Activated CD8-positive, alpha-beta T cell treated with anti-CD3 and anti-CD28 coated beads for 36 hours (primary cell): ENCODE measurements at regions of chr2 and their contacts with region 1.

Region 1: DNA sequence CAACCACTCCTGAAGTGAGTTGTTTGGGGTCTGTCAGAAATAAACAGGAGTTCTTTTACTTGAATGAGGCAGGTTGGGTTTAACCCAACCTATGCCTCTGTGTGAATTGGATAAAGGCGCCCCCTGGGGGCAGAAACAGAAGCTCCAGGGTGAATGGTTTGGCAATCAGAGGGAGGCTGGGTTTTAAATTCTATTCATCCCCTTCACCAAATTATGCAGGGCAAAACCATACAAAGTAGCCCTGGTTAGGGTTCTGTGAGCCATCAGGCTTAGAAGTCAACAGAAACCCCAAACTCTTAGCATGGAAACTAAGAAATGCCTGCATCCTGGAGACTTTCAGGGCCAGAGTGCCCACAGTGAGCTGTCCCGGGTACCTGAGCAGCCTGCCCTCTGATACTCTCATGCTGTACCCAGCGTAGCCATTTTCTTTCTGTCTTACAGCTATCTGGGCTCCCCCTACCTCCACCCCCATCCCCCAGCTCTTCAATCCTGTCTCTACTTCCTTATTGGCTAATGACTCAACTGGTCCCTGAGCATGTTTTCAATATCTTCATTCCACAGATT is 241.5 kb downstream of the ICOS start:
- DNase-seq: peak; percentile 85
- ATAC-seq: peak; percentile 89
- H3K4me3 Mint-ChIP-seq: no peak overlapping the region
- H3K27ac Mint-ChIP-seq: no peak overlapping the region
- H3K4me1 Mint-ChIP-seq: no peaks in the 10 kb centered on the region
- H3K27me3 Mint-ChIP-seq: peaks cover 8% of the 10 kb centered on the region
- CTCF ChIP-seq: peak; percentile 75

Region 2: GRCh38 chr2:204078003-204078698 is 99.9 kb before region 1 on chr2:
- CTCF ChIA-PET with region 1: interaction called, 83 read pairs
- POLR2A ChIA-PET with region 1: no interaction called
- intact Hi-C with region 1: loop called (anchors 2 kb)
- DNase-seq: no peak
- ATAC-seq: no peak
- H3K4me3 Mint-ChIP-seq: no peak overlapping the region
- H3K27ac Mint-ChIP-seq: no peak overlapping the region
- H3K4me1 Mint-ChIP-seq: peaks cover 2% of the 10 kb centered on the region
- H3K27me3 Mint-ChIP-seq: peaks cover 5% of the 10 kb centered on the region
- CTCF ChIP-seq: no peak

Region 3: GRCh38 chr2:204135752-204136151 is 42.3 kb before region 1 on chr2:
- CTCF ChIA-PET with region 1: interaction called, 25 read pairs
- POLR2A ChIA-PET with region 1: no interaction called
- intact Hi-C with region 1: loop called (anchors 5 kb)
- DNase-seq: no peak
- ATAC-seq: peak; percentile 51
- H3K4me3 Mint-ChIP-seq: no peak overlapping the region
- H3K27ac Mint-ChIP-seq: no peak overlapping the region
- H3K4me1 Mint-ChIP-seq: no peaks in the 10 kb centered on the region
- H3K27me3 Mint-ChIP-seq: peaks cover 4% of the 10 kb centered on the region
- CTCF ChIP-seq: no peak

Region 4: DNA sequence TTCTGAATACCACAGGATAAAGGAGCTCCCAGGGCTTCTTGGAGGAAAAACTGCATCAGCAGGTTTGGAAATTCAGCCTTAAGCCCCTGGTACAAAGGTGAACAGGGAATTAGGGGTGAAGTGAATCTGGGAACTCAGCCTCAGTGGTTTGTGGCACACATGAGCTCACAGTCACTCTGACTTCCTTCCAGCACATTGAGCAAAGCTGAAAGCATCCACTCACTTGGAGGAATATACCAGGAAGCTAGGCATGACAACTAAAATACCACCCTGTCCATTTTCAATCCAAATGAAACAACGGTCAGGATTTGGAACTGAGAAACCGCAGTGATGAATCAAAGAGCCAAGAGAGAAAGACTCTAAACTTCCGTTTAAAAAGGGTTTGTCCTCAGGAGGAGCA is 25.4 kb before region 1 on chr2:
- CTCF ChIA-PET with region 1: interaction called, 39 read pairs
- POLR2A ChIA-PET with region 1: no interaction called
- intact Hi-C with region 1: no loop called
- DNase-seq: no peak
- ATAC-seq: no peak
- H3K4me3 Mint-ChIP-seq: no peak overlapping the region
- H3K27ac Mint-ChIP-seq: no peak overlapping the region
- H3K4me1 Mint-ChIP-seq: no peaks in the 10 kb centered on the region
- H3K27me3 Mint-ChIP-seq: peaks cover 18% of the 10 kb centered on the region
- CTCF ChIP-seq: no peak

Region 5: DNA sequence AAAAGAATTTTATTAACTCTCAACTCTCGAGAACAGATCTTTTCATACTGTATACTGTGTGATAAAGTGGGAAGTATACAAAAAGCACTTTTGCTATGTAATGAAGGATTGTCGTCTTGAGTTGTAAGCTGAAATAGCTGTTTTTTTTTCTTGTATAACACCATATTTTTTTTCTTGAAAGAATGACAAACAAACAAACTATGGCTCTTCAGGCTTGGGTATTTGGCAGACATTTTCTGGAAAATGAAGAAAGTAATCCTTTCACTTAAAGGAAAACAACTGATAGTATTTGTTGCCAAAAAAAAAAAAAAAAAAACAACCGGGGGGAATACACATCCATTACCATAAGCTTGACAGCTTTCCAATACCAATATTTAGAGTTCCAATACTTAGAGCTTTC is 11.1 kb before region 1 on chr2:
- CTCF ChIA-PET with region 1: interaction called, 44 read pairs
- POLR2A ChIA-PET with region 1: no interaction called
- intact Hi-C with region 1: no loop called
- DNase-seq: no peak
- ATAC-seq: no peak
- H3K4me3 Mint-ChIP-seq: no peak overlapping the region
- H3K27ac Mint-ChIP-seq: no peak overlapping the region
- H3K4me1 Mint-ChIP-seq: no peaks in the 10 kb centered on the region
- H3K27me3 Mint-ChIP-seq: no peaks in the 10 kb centered on the region
- CTCF ChIP-seq: no peak

Region 6: GRCh38 chr2:204213588-204213987 is 35.5 kb after region 1 on chr2:
- CTCF ChIA-PET with region 1: interaction called, 13 read pairs
- POLR2A ChIA-PET with region 1: no interaction called
- intact Hi-C with region 1: no loop called
- DNase-seq: no peak
- ATAC-seq: no peak
- H3K4me3 Mint-ChIP-seq: no peak overlapping the region
- H3K27ac Mint-ChIP-seq: no peak overlapping the region
- H3K4me1 Mint-ChIP-seq: no peaks in the 10 kb centered on the region
- H3K27me3 Mint-ChIP-seq: peaks cover 1% of the 10 kb centered on the region
- CTCF ChIP-seq: no peak

Region 7: DNA sequence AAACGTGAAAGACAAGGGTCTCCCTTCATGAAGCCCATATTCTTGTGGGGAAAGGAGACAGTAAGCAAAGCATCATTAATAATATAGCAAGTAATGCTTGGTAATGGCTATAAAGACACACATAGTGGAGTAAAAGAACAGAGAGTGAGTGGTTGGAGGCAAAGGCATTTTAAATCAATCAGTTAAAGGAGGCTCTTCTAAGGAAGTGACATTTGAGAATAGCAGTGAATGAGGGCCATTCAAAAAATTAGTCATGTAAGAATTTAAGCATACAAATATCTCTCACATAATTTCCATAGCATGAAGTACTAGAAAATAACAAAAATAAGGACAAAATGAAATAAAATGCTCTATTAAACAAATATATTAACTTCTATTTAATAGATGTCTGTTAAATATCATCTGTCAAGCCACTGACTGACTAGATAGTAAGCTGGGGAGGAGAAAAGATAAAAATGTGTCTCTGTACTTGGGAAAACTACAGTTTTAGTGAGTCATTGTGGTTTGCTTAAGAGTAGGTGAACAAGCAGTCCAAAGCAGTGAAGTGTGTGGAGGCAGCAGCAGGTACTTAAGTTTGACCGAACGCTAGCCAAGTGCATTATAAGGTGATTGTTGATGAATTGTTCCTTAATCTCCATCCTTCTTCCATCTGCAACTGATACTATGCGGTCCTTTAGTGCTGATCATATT is 527.3 kb after region 1 on chr2:
- CTCF ChIA-PET with region 1: no interaction called
- POLR2A ChIA-PET with region 1: no interaction called
- intact Hi-C with region 1: no loop called
- DNase-seq: no peak
- ATAC-seq: no peak
- H3K4me3 Mint-ChIP-seq: no peak overlapping the region
- H3K27ac Mint-ChIP-seq: no peak overlapping the region
- H3K4me1 Mint-ChIP-seq: no peaks in the 10 kb centered on the region
- H3K27me3 Mint-ChIP-seq: peaks cover 2% of the 10 kb centered on the region
- CTCF ChIP-seq: no peak

Region 8: GRCh38 chr2:205776139-205776538 is 1598.1 kb after region 1 on chr2:
- CTCF ChIA-PET with region 1: no interaction called
- POLR2A ChIA-PET with region 1: no interaction called
- intact Hi-C with region 1: no loop called
- DNase-seq: peak; percentile 68
- ATAC-seq: no peak
- H3K4me3 Mint-ChIP-seq: no peak overlapping the region
- H3K27ac Mint-ChIP-seq: no peak overlapping the region
- H3K4me1 Mint-ChIP-seq: peaks cover 6% of the 10 kb centered on the region
- H3K27me3 Mint-ChIP-seq: peaks cover 11% of the 10 kb centered on the region
- CTCF ChIP-seq: peak; percentile 56